HepG2 (cell line): ENCODE measurements at regions of chr2 and their contacts with region 1.

Region 1: GRCh38 chr2:170715062-170715931 is at the start of gene SP5:
- DNase-seq: peak; percentile 100
- ATAC-seq: peak; percentile 72
- H3K4me3 ChIP-seq: peak within 1 kb of the TSS; percentile 95 to 99 (median 99)
- H3K27ac ChIP-seq: peak within 1 kb of the TSS; percentile 100
- H3K4me1 ChIP-seq: peaks cover 31% of the 10 kb centered on the region
- H3K27me3 ChIP-seq: no peaks in the 10 kb centered on the region; a peak in 1 of 5 replicates
- CTCF ChIP-seq: no peak
- EP300 ChIP-seq: peak; percentile 82 to 97
- POLR2A ChIP-seq: peak in 1 of 2 experiments; percentile 91; a peak in 2 of 4 replicates
- RAD21 ChIP-seq: peak; percentile 35; the same call in 1 of the 2 replicates
- total RNA-seq, gene SP5: 86.9 and 119 TPM in 2 replicates

Region 2: DNA sequence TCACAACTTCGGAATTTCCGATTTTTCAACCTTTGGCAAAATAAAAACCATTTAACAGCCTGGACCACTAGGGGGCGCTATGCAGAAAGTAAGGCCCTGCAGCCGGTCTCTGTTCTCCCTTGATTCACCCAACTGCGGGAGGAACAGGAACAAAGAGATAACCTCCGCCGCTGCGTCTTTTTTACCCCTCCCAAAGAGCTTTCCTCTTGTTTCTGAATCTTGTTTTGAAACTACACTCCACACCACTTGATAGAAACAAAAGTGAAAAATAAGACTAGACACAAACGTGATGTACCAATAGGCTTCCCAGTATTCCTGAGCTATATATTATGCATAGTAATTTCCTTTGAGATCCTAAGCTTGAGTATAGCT is 306.1 kb before region 1 on chr2:
- CTCF ChIA-PET with region 1: interaction called, 7 read pairs
- POLR2A ChIA-PET with region 1: interaction called, 39 read pairs
- in situ Hi-C with region 1: loop called (anchors 5 kb)
- intact Hi-C with region 1: loop called (anchors 2 kb)
- DNase-seq: peak; percentile 71
- ATAC-seq: peak; percentile 84
- H3K4me3 ChIP-seq: peak overlapping the region in 1 of 3 experiments; percentile 11; a peak in 1 of 6 replicates
- H3K27ac ChIP-seq: no peak overlapping the region
- H3K4me1 ChIP-seq: peaks cover 12% of the 10 kb centered on the region
- H3K27me3 ChIP-seq: peaks cover 2 to 53% of the 10 kb centered on the region in 2 experiments; a peak in 4 of 5 replicates
- CTCF ChIP-seq: peak; percentile 88
- EP300 ChIP-seq: no peak
- POLR2A ChIP-seq: no peak
- RAD21 ChIP-seq: peak; percentile 85

Region 3: GRCh38 chr2:170530284-170530745 is 185.0 kb before region 1 on chr2:
- CTCF ChIA-PET with region 1: no interaction called
- POLR2A ChIA-PET with region 1: interaction called, 7 read pairs
- in situ Hi-C with region 1: no loop called
- intact Hi-C with region 1: loop called (anchors 1 kb)
- DNase-seq: peak; percentile 94
- ATAC-seq: peak; percentile 96
- H3K4me3 ChIP-seq: peak overlapping the region in 2 of 3 experiments; percentile 5 to 23; a peak in 3 of 6 replicates
- H3K27ac ChIP-seq: no peak overlapping the region
- H3K4me1 ChIP-seq: peaks cover 28% of the 10 kb centered on the region
- H3K27me3 ChIP-seq: peaks cover 2 to 38% of the 10 kb centered on the region in 2 experiments; a peak in 3 of 5 replicates
- CTCF ChIP-seq: peak; percentile 64
- EP300 ChIP-seq: no peak; a peak in 1 of 4 replicates
- POLR2A ChIP-seq: no peak
- RAD21 ChIP-seq: 0 out of 2 replicates have a peak, but pooled peaks have one; percentile 39

Region 4: DNA sequence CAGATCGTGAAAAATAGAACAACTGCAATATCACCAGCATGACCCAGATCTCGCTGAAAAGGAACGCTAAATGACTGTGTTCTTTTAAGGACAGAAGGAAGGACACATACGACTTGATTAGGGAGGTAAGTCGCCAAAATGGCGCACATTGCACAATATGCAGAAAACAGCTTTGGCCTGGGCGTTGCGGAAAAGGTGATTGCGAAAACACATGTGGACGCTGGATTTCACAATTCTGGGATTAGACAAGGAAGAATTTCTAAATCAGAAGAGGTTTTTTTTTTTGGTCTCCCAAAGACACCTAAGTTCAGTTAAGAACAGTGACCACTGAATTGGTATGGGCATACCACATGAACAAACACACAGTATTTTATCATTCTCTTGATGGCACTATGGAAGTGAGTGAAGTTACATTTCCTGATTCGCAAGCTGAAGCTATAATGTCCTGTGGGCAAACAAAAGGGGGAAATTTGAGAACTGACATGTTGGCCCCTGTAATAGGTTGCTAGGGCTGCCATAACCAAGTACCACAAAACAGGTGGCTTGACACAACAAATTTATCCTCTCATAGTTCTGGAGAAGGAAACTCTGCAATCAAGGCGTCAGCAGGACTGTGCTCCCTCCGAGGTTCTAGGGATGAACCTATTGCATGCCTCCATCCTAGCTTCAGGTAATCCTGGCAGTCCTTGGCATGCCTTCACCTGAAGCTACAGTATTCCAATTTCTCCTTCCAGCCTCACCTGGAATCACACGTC is 29.1 kb after region 1 on chr2:
- CTCF ChIA-PET with region 1: no interaction called
- POLR2A ChIA-PET with region 1: interaction called, 16 read pairs
- in situ Hi-C with region 1: no loop called
- intact Hi-C with region 1: no loop called
- DNase-seq: peak; percentile 81
- ATAC-seq: peak; percentile 68
- H3K4me3 ChIP-seq: peak overlapping the region; percentile 46 to 59 (median 54)
- H3K27ac ChIP-seq: peak overlapping the region; percentile 9
- H3K4me1 ChIP-seq: peaks cover 24% of the 10 kb centered on the region
- H3K27me3 ChIP-seq: peaks cover 0 to 4% of the 10 kb centered on the region in 2 experiments; a peak in 2 of 5 replicates
- CTCF ChIP-seq: no peak
- EP300 ChIP-seq: peak; percentile 74 to 93; a peak in 2 of 4 replicates
- POLR2A ChIP-seq: no peak
- RAD21 ChIP-seq: no peak

Region 5: GRCh38 chr2:170928824-170929685 is 213.8 kb after region 1 on chr2 and contains the start of gene GORASP2:
- CTCF ChIA-PET with region 1: no interaction called
- POLR2A ChIA-PET with region 1: interaction called, 15 read pairs
- in situ Hi-C with region 1: no loop called
- intact Hi-C with region 1: loop called (anchors 2 kb)
- DNase-seq: peak; percentile 100
- ATAC-seq: peak; percentile 94
- H3K4me3 ChIP-seq: peak within 1 kb of the TSS; percentile 83 to 97 (median 92)
- H3K27ac ChIP-seq: peak within 1 kb of the TSS; percentile 94
- H3K4me1 ChIP-seq: peaks cover 56% of the 10 kb centered on the region
- H3K27me3 ChIP-seq: no peaks in the 10 kb centered on the region; a peak in 1 of 5 replicates
- CTCF ChIP-seq: peak; percentile 97
- EP300 ChIP-seq: peak in 1 of 2 experiments; percentile 67; a peak in 3 of 4 replicates
- POLR2A ChIP-seq: peak; percentile 79 to 90
- RAD21 ChIP-seq: peak; percentile 77
- total RNA-seq, gene GORASP2: 97.3 and 103 TPM in 2 replicates